H1 (cell line): ENCODE measurements at regions of chr3 and their contacts with region 1.

Region 1: DNA sequence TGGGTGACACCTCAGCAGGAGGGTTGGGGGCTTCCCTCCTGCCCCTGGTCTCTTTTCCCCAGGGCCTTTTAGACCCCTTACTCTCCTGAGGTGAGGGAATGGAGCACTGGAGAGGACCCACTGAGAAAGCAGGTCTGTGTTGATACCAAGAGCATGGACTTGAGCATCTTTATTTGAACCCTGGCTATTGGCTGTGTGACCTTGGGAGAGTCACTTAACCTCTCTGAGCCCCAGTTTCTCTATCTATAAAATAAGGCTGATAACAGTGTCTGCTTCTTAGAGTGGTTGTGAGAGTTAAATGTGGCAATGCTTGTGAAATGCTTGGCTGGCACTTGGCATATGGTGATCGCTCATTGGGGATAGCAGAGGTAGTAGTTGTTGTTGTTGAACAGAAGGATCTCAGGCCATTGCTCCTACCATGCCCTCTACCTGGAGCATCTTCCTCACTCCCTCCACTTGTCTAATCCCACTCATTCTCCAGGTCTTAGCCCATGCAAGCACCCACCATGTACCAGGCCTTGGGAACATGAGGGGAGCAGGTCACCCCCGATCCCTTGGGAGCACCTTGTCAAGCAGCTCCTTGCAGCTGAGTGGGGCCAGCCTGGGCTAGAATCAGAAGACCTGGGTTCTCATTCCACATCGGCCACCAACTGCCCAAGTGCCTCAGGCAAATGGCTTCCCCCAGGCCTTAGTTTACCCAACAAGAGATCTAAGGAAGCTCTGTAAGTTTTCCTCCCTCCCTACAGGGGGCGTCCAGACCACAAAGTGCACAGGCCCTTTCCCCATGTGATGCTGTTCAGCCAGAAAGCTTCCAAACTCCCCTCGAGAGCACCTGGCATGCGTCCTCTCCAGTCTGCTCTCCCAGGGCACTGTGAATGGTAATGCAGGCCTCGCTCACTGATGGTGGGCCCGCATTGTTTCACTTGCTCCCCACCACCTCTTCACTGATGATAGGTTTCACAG is 96.7 kb downstream of the LSM3 start:
- DNase-seq: no peak
- H3K4me3 ChIP-seq: no peak overlapping the region
- H3K27ac ChIP-seq: no peak overlapping the region
- H3K4me1 ChIP-seq: peaks cover 4 to 31% (median 22%) of the 10 kb centered on the region in 4 experiments
- H3K27me3 ChIP-seq: no peaks in the 10 kb centered on the region; a peak in 1 of 7 replicates
- CTCF ChIP-seq: peak; percentile 54 to 74 (median 67)
- EP300 ChIP-seq: no peak
- POLR2A ChIP-seq: no peak
- RAD21 ChIP-seq: peak; percentile 70 to 82

Region 2: GRCh38 chr3:14243782-14244181 is 31.5 kb before region 1 on chr3:
- CTCF ChIA-PET with region 1: no interaction called
- POLR2A ChIA-PET with region 1: no interaction called
- DNase-seq: no peak
- H3K4me3 ChIP-seq: no peak overlapping the region
- H3K27ac ChIP-seq: no peak overlapping the region
- H3K4me1 ChIP-seq: no peaks in the 10 kb centered on the region
- H3K27me3 ChIP-seq: peaks cover 0 to 3% (median 0%) of the 10 kb centered on the region in 4 experiments; a peak in 1 of 7 replicates
- CTCF ChIP-seq: no peak
- EP300 ChIP-seq: no peak
- POLR2A ChIP-seq: no peak
- RAD21 ChIP-seq: no peak

Region 3: DNA sequence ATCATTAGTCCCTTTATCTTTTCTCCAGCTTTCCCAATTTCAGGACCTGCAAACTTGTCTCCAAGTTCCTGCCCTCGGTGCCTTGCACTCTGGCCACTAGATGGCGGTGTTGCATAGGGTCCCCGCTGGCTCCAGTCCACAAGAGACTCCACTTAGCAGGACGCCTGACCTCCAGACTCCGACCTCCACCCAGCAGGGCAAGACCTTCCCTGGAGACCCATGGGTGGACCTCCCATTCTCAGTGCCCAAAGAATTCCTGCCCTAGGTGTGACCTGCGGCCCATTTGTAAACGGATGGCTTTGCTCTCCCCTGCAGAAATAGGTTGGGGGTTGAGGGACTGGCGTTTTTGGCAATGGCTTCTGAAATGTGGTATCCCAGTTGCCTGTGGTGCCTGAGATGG is 14.1 kb before region 1 on chr3:
- CTCF ChIA-PET with region 1: interaction called, 27 read pairs
- POLR2A ChIA-PET with region 1: interaction called, 4 read pairs
- DNase-seq: peak in 1 of 2 experiments; percentile 97
- H3K4me3 ChIP-seq: no peak overlapping the region
- H3K27ac ChIP-seq: no peak overlapping the region
- H3K4me1 ChIP-seq: peaks cover 0 to 7% (median 0%) of the 10 kb centered on the region in 4 experiments; a peak in 1 of 7 replicates
- H3K27me3 ChIP-seq: 0 out of 7 replicates have a peak, but pooled peaks cover 0 to 3% (median 0%) of the 10 kb centered on the region in 4 experiments
- CTCF ChIP-seq: peak; percentile 95
- EP300 ChIP-seq: no peak
- POLR2A ChIP-seq: no peak
- RAD21 ChIP-seq: peak; percentile 99

Region 4: DNA sequence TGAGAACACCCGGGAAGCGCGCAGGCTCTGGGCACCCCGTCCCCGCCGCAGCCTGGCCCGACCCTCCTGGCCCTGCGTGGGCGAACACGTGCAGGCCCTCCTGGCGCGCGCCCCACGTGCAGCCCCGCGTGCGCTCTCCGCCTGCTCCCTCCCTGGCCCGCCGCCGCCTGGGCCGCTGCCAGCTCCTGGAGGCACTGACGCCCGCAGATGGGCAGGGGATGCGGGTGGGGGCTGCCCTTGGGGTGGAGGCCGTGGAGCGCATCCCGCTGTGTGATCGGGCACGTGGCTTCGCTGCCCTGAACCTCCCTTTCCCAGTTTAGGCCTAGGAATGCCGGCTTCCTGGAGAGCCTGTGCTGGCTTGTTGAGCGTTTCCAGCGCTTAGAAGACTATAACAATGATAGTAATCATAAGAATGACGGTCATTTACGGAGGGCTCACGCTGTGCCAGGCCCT is 22.5 kb after region 1 on chr3:
- CTCF ChIA-PET with region 1: interaction called, 75 read pairs
- POLR2A ChIA-PET with region 1: no interaction called
- DNase-seq: peak in 1 of 2 experiments; percentile 67
- H3K4me3 ChIP-seq: peak overlapping the region in 1 of 4 experiments; percentile 31; a peak in 1 of 8 replicates
- H3K27ac ChIP-seq: no peak overlapping the region
- H3K4me1 ChIP-seq: peaks cover 0 to 4% (median 0%) of the 10 kb centered on the region in 4 experiments; a peak in 1 of 7 replicates
- H3K27me3 ChIP-seq: peaks cover 0 to 2% (median under 1%) of the 10 kb centered on the region in 4 experiments; a peak in 2 of 7 replicates
- CTCF ChIP-seq: no peak
- EP300 ChIP-seq: no peak
- POLR2A ChIP-seq: no peak
- RAD21 ChIP-seq: no peak

Region 5: DNA sequence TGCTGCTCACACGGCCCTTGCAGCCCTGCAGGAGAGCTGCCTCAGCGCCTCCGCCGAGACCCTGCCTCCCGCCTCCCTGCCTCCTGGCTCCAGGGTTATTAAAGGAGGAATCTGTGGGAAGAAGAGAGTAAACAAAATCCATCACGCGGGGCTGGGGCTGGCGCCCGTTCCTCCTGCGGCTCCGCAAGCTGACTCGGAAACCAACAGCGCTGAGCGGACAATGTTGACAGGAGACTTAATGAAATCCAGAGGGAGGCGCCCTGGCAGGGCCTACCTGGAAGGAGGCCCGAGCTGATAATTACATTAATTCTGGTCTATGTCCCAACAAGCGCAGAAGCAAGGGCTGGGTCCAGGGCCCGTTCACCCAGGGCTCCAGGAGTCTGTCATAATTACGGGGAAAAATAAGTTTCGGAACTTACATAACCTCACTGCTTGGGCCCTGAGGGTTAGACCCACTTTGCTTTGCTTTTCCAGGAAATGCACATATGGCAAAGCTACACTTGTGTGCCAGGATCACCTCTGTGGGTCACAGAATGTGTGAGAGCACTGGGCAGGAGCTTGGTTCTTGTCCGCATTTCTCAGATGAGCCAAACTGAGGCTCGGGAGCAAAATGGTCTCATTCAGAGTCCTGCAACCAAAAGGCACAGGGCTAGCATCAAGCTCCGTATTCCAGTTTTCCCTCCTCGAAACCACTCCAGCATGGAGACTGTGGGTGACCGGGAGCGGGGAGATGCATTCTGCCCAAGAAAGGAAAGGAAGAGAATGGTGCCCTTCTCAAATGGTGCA is 83.3 kb after region 1 on chr3:
- CTCF ChIA-PET with region 1: interaction called, 19 read pairs
- POLR2A ChIA-PET with region 1: no interaction called
- DNase-seq: no peak
- H3K4me3 ChIP-seq: no peak overlapping the region
- H3K27ac ChIP-seq: no peak overlapping the region
- H3K4me1 ChIP-seq: peaks cover 0 to under 1% (median under 1%) of the 10 kb centered on the region in 4 experiments; a peak in 5 of 7 replicates
- H3K27me3 ChIP-seq: no peaks in the 10 kb centered on the region
- CTCF ChIP-seq: 0 out of 4 replicates have a peak, but pooled peaks of 1 of the 3 experiments have one; percentile 9
- EP300 ChIP-seq: no peak
- POLR2A ChIP-seq: no peak
- RAD21 ChIP-seq: 0 out of 4 replicates have a peak, but pooled peaks of 1 of the 2 experiments have one; percentile 5

Region 6: GRCh38 chr3:14391033-14391432 is 115.8 kb after region 1 on chr3:
- CTCF ChIA-PET with region 1: interaction called, 10 read pairs
- POLR2A ChIA-PET with region 1: interaction called, 3 read pairs
- DNase-seq: no peak
- H3K4me3 ChIP-seq: no peak overlapping the region
- H3K27ac ChIP-seq: no peak overlapping the region
- H3K4me1 ChIP-seq: peaks cover 0 to 5% (median 3%) of the 10 kb centered on the region in 4 experiments; a peak in 6 of 7 replicates
- H3K27me3 ChIP-seq: no peaks in the 10 kb centered on the region
- CTCF ChIP-seq: no peak
- EP300 ChIP-seq: no peak
- POLR2A ChIP-seq: no peak
- RAD21 ChIP-seq: no peak

Region 7: DNA sequence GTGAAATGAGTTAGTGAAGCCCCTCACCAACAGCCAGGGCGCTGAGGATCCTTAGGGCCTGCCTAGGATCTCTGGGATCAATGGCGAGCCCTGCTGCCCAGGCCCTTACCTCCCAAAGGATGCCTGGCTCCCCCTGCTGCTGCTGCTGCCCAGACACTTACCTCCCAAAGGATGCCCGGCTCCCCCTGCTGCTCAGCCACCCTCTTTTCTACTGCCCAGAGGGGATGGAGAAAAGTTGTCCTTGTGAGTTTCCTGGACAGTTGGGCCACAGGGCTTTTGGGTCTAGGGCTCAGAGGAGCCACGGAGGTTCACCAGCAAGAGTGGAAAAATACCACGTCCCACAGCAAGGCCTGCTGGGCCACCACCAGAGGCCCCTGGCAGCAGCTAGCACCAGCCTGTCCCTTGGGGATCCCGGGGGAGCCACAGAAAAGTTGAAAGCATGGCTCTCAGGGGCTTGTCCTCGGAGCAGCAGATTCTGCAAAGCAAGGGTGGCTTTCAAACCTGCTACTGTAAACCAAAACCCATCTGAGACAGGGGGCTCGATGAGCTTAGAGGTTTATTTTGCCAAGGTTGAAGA is 186.6 kb after region 1 on chr3:
- CTCF ChIA-PET with region 1: interaction called, 19 read pairs
- POLR2A ChIA-PET with region 1: no interaction called
- DNase-seq: no peak
- H3K4me3 ChIP-seq: no peak overlapping the region
- H3K27ac ChIP-seq: no peak overlapping the region
- H3K4me1 ChIP-seq: peaks cover 0 to 8% (median 5%) of the 10 kb centered on the region in 4 experiments; a peak in 6 of 7 replicates
- H3K27me3 ChIP-seq: no peaks in the 10 kb centered on the region
- CTCF ChIP-seq: peak in 2 of 3 experiments; percentile 77 to 99; a peak in 3 of 4 replicates
- EP300 ChIP-seq: no peak
- POLR2A ChIP-seq: no peak
- RAD21 ChIP-seq: peak; percentile 79 to 83